ENCODE measurements at regions of chr1 and their contacts with region 1.

Region 1: GRCh38 chr1:116737020-116737854 is 17.0 kb upstream of the CD2 start:
- DNase-seq: peak; percentile 70
- H3K4me3 Mint-ChIP-seq: peak overlapping the region; percentile 61
- H3K27ac Mint-ChIP-seq: peak overlapping the region; percentile 100
- H3K4me1 Mint-ChIP-seq: peaks cover 69% of the 10 kb centered on the region
- H3K27me3 Mint-ChIP-seq: no peaks in the 10 kb centered on the region

Region 2: DNA sequence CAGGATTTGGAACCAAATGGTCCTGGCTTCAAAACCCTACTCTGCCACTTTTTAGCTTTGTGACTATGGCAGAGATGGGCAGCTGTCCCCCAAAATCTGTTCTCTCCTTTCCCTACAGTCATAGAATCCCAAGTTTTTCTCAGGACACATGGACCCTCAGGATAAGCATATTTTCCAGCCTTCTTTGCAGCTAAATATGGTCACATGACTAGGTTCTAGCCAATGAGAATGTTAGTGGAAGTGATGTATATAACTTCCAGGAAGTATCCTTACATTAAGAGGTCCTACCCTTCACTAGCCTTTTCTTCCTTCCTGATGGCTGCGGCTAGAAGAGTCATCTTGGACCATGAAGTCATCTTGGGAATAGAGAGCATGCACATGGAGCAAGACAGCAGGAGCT is 75.6 kb before region 1 on chr1:
- intact Hi-C with region 1: no loop called
- DNase-seq: no peak
- H3K4me3 Mint-ChIP-seq: no peak overlapping the region
- H3K27ac Mint-ChIP-seq: no peak overlapping the region
- H3K4me1 Mint-ChIP-seq: peaks cover 12% of the 10 kb centered on the region
- H3K27me3 Mint-ChIP-seq: peaks cover 33% of the 10 kb centered on the region

Region 3: DNA sequence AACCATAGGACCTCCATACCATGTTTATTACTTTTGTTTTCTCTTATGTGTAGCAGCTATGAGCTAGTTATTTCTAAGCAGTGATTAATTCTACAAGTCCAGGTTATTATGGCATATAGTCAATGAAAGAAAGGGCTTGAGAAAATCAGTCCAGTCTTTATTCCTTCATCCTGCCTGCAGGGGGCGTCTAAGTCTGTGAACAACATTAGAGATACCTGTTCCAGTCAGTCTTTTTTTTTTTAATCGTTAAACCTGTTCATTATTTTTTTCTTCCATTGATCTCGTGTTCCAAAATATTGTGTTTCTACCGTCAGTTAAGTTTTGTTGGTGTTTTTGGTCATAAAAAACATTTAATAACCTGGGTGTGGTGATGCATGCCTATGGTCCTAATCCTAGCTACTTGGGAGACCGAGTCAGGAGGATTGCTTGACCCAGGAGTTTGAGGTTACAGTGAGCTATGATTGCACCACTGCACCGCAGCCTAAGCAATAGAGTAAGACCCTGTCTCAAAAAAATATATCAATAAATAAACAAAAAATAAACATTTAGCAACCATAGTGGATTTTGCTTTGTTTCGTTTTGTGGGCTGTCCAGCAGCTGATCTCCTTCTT is 12.4 kb before region 1 on chr1:
- intact Hi-C with region 1: loop called (anchors 1 kb)
- DNase-seq: peak; percentile 65
- H3K4me3 Mint-ChIP-seq: no peak overlapping the region
- H3K27ac Mint-ChIP-seq: no peak overlapping the region
- H3K4me1 Mint-ChIP-seq: peaks cover 33% of the 10 kb centered on the region
- H3K27me3 Mint-ChIP-seq: no peaks in the 10 kb centered on the region

Region 4: DNA sequence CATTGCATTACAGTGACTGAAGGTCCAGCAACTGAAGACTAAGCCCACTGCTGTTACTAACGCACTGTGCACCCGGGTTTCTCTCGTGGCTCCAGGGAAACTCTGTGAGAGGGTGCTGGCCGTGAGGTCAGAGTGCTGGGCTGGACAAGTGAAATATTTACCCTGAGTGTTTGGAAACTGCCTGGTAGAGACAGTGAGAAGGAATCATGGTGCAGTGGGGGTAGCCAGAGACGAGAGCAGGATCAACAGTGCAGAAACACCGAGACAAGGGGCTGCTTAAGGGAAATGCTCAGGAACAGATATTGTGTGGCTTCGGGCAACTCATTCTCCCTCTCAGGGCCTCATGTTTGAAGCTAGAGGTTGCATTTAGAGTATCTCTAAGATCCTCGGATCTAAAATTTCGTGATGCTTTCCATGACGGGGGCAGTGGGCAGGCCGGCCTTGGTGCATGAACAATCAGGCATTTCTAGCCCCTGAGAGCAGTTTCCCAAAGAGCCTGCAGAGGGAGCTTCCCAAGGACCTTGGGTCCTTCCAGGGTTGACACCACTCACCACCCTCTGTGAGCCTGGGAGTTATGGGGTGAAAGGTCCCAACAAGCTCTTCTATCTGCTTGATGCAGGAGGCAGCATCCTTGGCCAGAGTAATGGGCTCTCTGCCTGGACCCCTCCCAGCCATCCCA is 26.7 kb after region 1 on chr1:
- intact Hi-C with region 1: loop called (anchors 1 kb)
- DNase-seq: no peak
- H3K4me3 Mint-ChIP-seq: peak overlapping the region; percentile 84
- H3K27ac Mint-ChIP-seq: peak overlapping the region; percentile 100
- H3K4me1 Mint-ChIP-seq: peaks cover 88% of the 10 kb centered on the region
- H3K27me3 Mint-ChIP-seq: no peaks in the 10 kb centered on the region

Region 5: GRCh38 chr1:116817582-116818064 is 80.4 kb after region 1 on chr1:
- intact Hi-C with region 1: loop called (anchors 1 kb)
- DNase-seq: peak; percentile 58
- H3K4me3 Mint-ChIP-seq: no peak overlapping the region
- H3K27ac Mint-ChIP-seq: peak overlapping the region; percentile 61
- H3K4me1 Mint-ChIP-seq: peaks cover 50% of the 10 kb centered on the region
- H3K27me3 Mint-ChIP-seq: no peaks in the 10 kb centered on the region

Region 6: DNA sequence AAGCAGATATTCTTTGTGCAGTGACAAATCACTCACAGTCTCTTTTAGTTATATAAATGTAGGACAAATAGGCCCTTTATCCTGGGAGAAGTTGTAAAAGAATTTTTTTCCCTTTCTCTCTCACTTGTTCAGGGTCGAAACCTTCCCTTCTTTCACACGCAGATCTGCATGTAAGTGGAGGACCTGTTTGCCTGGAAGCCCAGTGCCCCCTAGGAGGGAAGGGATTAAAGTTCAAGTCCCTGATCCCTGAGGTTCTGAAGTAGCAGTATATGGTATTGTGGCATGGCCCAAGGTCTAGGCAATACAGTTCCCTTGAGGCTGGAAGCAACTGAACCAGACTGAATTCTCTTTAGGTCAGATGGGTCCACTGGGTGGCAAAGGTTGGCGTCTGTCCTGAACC is 123.9 kb after region 1 on chr1:
- intact Hi-C with region 1: no loop called
- DNase-seq: no peak
- H3K4me3 Mint-ChIP-seq: no peak overlapping the region
- H3K27ac Mint-ChIP-seq: no peak overlapping the region
- H3K4me1 Mint-ChIP-seq: no peaks in the 10 kb centered on the region
- H3K27me3 Mint-ChIP-seq: no peaks in the 10 kb centered on the region